ENCODE measurements at regions of chr7 and their contacts with region 1.

Region 1: GRCh38 chr7:56051339-56052191 is at the starts of genes CCT6A and PSPH:
- DNase-seq: peak; percentile 95
- ATAC-seq: peak; percentile 95
- H3K4me3 Mint-ChIP-seq: peak within 1 kb of the TSS; percentile 96
- H3K27ac Mint-ChIP-seq: peak within 1 kb of the TSS; percentile 95
- H3K4me1 Mint-ChIP-seq: peaks cover 49% of the 10 kb centered on the region
- H3K27me3 Mint-ChIP-seq: no peaks in the 10 kb centered on the region
- total RNA-seq, gene CCT6A: 182 to 237 TPM
- total RNA-seq, gene PSPH: 24.4 to 30.3 TPM

Region 2: DNA sequence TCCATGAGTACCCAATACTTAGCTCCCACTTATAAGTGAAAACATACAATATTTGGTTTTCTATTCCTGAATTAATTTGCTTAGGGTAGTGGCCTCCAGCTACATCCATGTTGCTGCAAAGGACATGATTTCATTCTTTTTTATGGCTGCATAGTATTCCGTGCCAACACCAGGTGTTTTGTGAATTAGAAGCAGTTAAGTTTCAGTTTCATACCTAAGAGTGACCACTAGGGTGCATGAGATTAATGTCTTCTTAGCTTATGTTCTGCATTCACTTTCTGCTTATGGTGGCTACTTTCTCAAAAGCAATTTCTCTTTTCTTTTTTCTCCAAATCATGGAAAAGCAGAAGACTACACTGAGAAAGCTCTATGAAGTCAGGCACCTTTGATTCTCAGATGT is 1574.5 kb before region 1 on chr7:
- CTCF ChIA-PET with region 1: no interaction called
- POLR2A ChIA-PET with region 1: no interaction called
- intact Hi-C with region 1: no loop called
- DNase-seq: no peak
- ATAC-seq: no peak
- H3K4me3 Mint-ChIP-seq: no peak overlapping the region
- H3K27ac Mint-ChIP-seq: no peak overlapping the region
- H3K4me1 Mint-ChIP-seq: no peaks in the 10 kb centered on the region
- H3K27me3 Mint-ChIP-seq: no peaks in the 10 kb centered on the region

Region 3: DNA sequence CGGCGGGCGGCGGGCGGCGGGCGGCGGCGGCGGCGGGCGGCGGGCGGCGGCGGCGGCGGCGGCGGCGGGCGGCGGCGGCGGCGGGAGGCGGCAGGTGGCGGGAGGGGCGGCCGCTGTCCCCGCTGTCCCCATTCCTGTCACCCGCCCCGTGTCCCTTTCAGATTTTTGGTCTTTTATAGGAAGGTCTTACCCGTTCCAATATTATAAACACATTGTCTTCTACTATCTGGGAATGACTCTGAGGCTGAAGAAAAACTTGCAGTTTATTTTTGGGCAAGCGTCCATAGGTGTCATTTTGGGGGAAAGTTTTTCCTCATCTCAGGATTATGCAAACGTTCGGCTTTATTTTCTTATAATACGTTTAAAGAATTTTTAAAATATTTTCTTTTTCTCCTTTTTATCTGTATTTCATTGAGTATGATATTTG is 163.7 kb before region 1 on chr7:
- CTCF ChIA-PET with region 1: no interaction called
- POLR2A ChIA-PET with region 1: no interaction called
- intact Hi-C with region 1: loop called in 1 of 2 experiments (anchors 1 kb)
- DNase-seq: peak; percentile 21
- ATAC-seq: no peak
- H3K4me3 Mint-ChIP-seq: peak overlapping the region; percentile 80
- H3K27ac Mint-ChIP-seq: peak overlapping the region; percentile 82
- H3K4me1 Mint-ChIP-seq: peaks cover 5% of the 10 kb centered on the region
- H3K27me3 Mint-ChIP-seq: no peaks in the 10 kb centered on the region

Region 4: DNA sequence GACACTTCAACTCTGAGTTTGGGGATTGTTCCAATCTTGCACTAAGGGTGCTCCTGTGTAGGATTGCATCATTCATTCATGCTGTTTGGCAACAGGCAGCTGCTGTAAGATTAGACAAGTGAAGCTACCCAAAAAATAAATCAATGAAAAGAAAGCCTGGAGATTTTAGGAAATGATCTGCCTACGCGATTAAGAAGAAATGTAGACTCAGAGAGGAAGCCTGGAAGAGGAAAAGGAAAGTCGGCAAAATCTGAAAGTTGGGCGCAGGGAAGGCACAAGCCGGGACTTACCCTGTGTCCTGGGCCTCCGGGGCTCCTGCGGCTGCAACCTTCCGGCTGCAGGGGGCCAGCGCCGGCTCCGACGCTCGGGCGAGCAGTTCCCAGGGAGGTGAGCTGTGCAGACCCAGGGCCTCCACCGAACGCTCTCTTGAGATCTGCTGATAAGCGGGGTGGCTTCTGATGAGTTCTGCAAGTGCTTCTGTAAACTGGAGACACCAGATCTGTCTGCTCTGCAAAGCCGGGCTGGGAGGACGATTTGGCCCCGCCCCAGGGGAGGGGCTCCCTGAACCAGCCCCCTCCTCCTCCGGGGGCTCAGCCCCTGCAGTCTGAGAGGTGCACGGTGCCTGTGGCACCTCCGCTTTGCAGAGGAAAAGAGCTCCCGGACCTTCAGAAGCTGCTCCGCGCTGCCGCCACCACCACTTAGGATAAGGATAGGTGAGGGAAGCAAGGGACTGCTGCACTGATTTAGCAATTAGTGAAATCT is 17.7 kb before region 1 on chr7:
- CTCF ChIA-PET with region 1: interaction called, 9 read pairs
- POLR2A ChIA-PET with region 1: interaction called, 6 read pairs
- intact Hi-C with region 1: loop called (anchors 1 to 2 kb)
- DNase-seq: peak; percentile 78
- ATAC-seq: peak; percentile 96
- H3K4me3 Mint-ChIP-seq: peak overlapping the region; percentile 81
- H3K27ac Mint-ChIP-seq: peak overlapping the region; percentile 84
- H3K4me1 Mint-ChIP-seq: peaks cover 8% of the 10 kb centered on the region
- H3K27me3 Mint-ChIP-seq: no peaks in the 10 kb centered on the region

Region 5: DNA sequence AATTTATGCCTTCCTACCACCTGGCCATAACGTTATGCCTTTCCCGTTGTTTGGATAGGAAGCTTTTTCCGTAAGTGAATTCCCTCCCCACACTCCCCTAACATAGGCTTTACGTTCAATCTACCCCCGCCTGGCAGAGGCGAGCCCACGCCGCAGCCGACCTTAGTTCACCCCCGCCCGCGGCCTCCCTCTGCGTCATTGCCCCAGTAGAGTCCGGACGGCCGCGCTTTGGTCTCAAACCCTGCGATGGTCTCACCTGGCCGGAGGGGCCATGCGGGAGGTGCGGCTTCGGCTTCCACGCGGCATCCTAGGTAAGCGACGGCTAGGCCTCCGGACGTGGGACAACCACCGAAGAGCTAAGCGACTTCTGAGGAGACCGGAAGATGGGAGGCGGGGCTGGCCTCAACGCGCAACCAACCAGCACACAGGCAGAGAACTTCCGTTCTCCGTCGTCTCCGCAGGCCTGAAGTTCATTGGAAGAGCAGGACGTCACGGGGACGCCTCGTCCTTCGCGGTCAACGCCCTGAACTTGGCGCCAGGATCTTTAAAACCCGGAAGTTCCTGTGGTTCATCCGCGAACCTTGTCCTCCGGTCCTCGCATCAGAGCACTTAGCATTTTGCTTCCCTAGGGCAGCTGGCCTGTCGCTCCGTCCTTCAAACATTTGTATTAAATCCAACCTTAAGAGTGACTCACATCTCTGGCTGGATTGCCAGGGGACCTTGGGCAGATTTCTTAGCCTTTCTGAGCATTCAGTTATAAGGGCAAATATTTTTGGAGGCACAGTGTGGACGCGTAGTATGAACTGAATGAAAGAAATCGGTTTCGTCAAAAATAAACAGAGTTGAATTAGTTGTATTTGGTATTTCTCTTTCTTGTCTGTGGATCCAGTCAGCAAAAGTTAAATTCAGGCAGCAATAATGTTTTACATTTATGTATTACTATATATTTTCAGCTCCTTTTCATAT is 54.8 kb after region 1 on chr7 and contains the start of gene CHCHD2:
- CTCF ChIA-PET with region 1: no interaction called
- POLR2A ChIA-PET with region 1: interaction called, 3 read pairs
- intact Hi-C with region 1: loop called (anchors 1 to 2 kb)
- DNase-seq: peak; percentile 96
- ATAC-seq: peak; percentile 98
- H3K4me3 Mint-ChIP-seq: peak within 1 kb of the TSS; percentile 90
- H3K27ac Mint-ChIP-seq: peak within 1 kb of the TSS; percentile 99
- H3K4me1 Mint-ChIP-seq: peaks cover 37% of the 10 kb centered on the region
- H3K27me3 Mint-ChIP-seq: no peaks in the 10 kb centered on the region
- total RNA-seq, gene CHCHD2: 537 to 693 TPM